Tibial artery (tissue), 4 donors: ENCODE measurements at regions of chr14 and their contacts with region 1.

Region 1: GRCh38 chr14:55333711-55334485 is 62.7 kb downstream of the FBXO34 start:
- DNase-seq: no peak
- H3K4me3 ChIP-seq: no peak overlapping the region
- H3K27ac ChIP-seq: no peak overlapping the region
- H3K4me1 ChIP-seq: peaks cover 0 to 29% (median 17%) of the 10 kb centered on the region in 4 donors
- H3K27me3 ChIP-seq: no peaks in the 10 kb centered on the region
- CTCF ChIP-seq: no peak

Region 2: GRCh38 chr14:55062517-55063351 is 271.2 kb before region 1 on chr14:
- intact Hi-C with region 1: no loop called
- DNase-seq: no peak
- H3K4me3 ChIP-seq: no peak overlapping the region
- H3K27ac ChIP-seq: peak overlapping the region in 1 of 2 donors; percentile 32
- H3K4me1 ChIP-seq: peaks cover 0 to 67% (median 18%) of the 10 kb centered on the region in 4 donors
- H3K27me3 ChIP-seq: no peaks in the 10 kb centered on the region
- CTCF ChIP-seq: no peak

Region 3: DNA sequence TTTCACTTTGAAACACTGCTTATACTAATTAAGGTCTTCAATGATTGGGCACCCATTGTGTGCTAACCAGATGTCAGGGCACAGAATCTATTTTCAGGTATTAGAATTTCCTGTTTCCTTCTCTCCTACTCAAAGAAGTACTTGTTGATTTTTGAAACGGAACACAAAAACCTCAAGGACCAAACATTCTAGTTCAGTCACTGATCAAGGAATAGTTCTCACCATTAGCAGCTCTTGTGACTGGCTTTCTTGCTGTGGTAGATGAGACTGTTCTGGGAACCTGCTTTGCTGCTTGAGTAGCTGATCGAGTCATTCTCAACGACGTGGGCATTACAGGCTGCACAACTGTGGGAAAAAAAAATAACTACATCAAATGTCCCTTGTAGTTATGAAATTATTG is 153.5 kb before region 1 on chr14:
- intact Hi-C with region 1: no loop called
- DNase-seq: no peak
- H3K4me3 ChIP-seq: no peak overlapping the region
- H3K27ac ChIP-seq: no peak overlapping the region
- H3K4me1 ChIP-seq: no peaks in the 10 kb centered on the region
- H3K27me3 ChIP-seq: no peaks in the 10 kb centered on the region
- CTCF ChIP-seq: no peak

Region 4: DNA sequence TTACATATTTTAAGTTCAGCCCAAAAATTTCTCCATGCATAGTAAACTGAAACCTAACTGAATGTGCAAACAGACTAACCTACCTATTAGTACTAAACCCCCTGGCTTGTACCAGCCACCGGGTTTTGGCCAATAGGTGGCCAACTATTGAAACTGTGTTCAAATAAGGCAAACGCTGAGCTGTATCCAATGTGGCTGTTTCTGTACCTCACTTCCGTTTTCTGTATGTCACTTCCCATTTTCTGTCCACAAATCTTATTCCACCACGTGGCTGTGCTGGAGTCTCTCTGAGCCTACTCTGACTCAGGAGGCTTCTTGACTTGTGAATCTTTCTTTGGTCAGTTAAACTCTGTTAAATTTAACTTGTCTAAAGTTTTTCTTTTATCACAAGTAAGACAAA is 68.7 kb before region 1 on chr14:
- intact Hi-C with region 1: loop called (anchors 10 kb)
- DNase-seq: no peak
- H3K4me3 ChIP-seq: no peak overlapping the region
- H3K27ac ChIP-seq: no peak overlapping the region
- H3K4me1 ChIP-seq: peaks cover 0 to 20% (median 3%) of the 10 kb centered on the region in 4 donors
- H3K27me3 ChIP-seq: no peaks in the 10 kb centered on the region
- CTCF ChIP-seq: no peak

Region 5: GRCh38 chr14:55689981-55690863 is 356.3 kb after region 1 on chr14:
- intact Hi-C with region 1: no loop called
- DNase-seq: no peak
- H3K4me3 ChIP-seq: no peak overlapping the region
- H3K27ac ChIP-seq: no peak overlapping the region
- H3K4me1 ChIP-seq: no peaks in the 10 kb centered on the region
- H3K27me3 ChIP-seq: no peaks in the 10 kb centered on the region
- CTCF ChIP-seq: no peak